HepG2 (cell line): ENCODE measurements at regions of chr7 and their contacts with region 1.

Region 1: GRCh38 chr7:87416682-87417587 is 58.5 kb downstream of the ABCB4 start:
- DNase-seq: peak; percentile 59
- ATAC-seq: peak; percentile 77
- H3K4me3 ChIP-seq: no peak overlapping the region
- H3K27ac ChIP-seq: no peak overlapping the region
- H3K4me1 ChIP-seq: peaks cover 11% of the 10 kb centered on the region
- H3K27me3 ChIP-seq: no peaks in the 10 kb centered on the region
- CTCF ChIP-seq: peak; percentile 85
- EP300 ChIP-seq: no peak
- POLR2A ChIP-seq: no peak
- RAD21 ChIP-seq: peak; percentile 73

Region 2: GRCh38 chr7:86926732-86927131 is 490.2 kb before region 1 on chr7:
- CTCF ChIA-PET with region 1: no interaction called
- POLR2A ChIA-PET with region 1: no interaction called
- in situ Hi-C with region 1: loop called (anchors 25 kb)
- intact Hi-C with region 1: loop called (anchors 5 kb)
- DNase-seq: peak; percentile 28
- ATAC-seq: peak; percentile 46; the same call in 2 of the 3 replicates
- H3K4me3 ChIP-seq: no peak overlapping the region
- H3K27ac ChIP-seq: no peak overlapping the region
- H3K4me1 ChIP-seq: no peaks in the 10 kb centered on the region
- H3K27me3 ChIP-seq: no peaks in the 10 kb centered on the region
- CTCF ChIP-seq: peak; percentile 65
- EP300 ChIP-seq: no peak
- POLR2A ChIP-seq: no peak
- RAD21 ChIP-seq: no peak

Region 3: GRCh38 chr7:86939197-86939814 is 477.6 kb before region 1 on chr7:
- CTCF ChIA-PET with region 1: no interaction called
- POLR2A ChIA-PET with region 1: no interaction called
- in situ Hi-C with region 1: loop called (anchors 25 kb)
- intact Hi-C with region 1: no loop called
- DNase-seq: peak; percentile 67
- ATAC-seq: peak; percentile 84
- H3K4me3 ChIP-seq: no peak overlapping the region
- H3K27ac ChIP-seq: no peak overlapping the region
- H3K4me1 ChIP-seq: no peaks in the 10 kb centered on the region
- H3K27me3 ChIP-seq: no peaks in the 10 kb centered on the region
- CTCF ChIP-seq: peak; percentile 72
- EP300 ChIP-seq: no peak
- POLR2A ChIP-seq: no peak
- RAD21 ChIP-seq: peak; percentile 46; the same call in 1 of the 2 replicates

Region 4: DNA sequence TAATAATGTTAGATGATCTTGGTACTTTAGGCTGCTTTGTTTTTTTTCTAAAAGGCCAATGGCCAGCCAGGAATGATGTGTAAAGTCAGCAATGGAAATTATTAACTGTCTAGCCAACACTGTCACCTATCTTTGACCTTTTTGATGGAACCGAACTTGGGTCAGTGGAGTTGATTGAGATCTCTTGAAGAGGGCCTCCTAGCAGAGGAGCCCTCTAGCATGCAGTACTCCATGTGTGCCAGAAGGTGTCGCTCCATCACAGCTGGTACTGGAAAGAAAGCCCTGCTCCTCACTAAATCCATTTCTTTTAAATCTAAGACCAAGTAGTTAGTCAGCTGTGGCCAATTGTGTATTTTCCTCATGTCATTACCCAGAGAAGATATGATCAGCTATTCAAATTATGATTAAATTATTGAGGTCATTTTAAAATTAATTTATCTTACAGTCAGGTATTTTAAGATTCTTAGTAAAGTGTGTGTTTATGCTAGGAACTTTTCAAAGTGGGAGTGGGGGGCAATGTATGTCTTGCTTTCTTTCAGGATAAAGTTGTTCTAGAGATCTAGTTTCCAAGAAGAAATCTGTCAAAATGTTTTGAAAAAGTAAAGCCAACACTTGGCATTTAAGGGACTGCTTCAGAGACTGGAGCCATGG is 104.6 kb before region 1 on chr7:
- CTCF ChIA-PET with region 1: interaction called, 86 read pairs
- POLR2A ChIA-PET with region 1: interaction called, 6 read pairs
- in situ Hi-C with region 1: loop called (anchors 5 kb)
- intact Hi-C with region 1: loop called (anchors 1 kb)
- DNase-seq: peak; percentile 56
- ATAC-seq: peak; percentile 84
- H3K4me3 ChIP-seq: no peak overlapping the region
- H3K27ac ChIP-seq: no peak overlapping the region
- H3K4me1 ChIP-seq: peaks cover 42% of the 10 kb centered on the region
- H3K27me3 ChIP-seq: no peaks in the 10 kb centered on the region
- CTCF ChIP-seq: peak; percentile 95
- EP300 ChIP-seq: no peak
- POLR2A ChIP-seq: no peak
- RAD21 ChIP-seq: peak; percentile 92